ENCODE measurements at regions of chr22 and their contacts with region 1.

Region 1: GRCh38 chr22:50169181-50169759 is 1.3 kb upstream of the PANX2 start:
- DNase-seq: no peak
- ATAC-seq: no peak
- H3K4me3 ChIP-seq: no peak overlapping the region; a peak in 1 of 4 replicates
- H3K27ac ChIP-seq: no peak overlapping the region
- H3K4me1 ChIP-seq: no peaks in the 10 kb centered on the region
- H3K27me3 ChIP-seq: no peaks in the 10 kb centered on the region
- CTCF ChIP-seq: no peak

Region 2: DNA sequence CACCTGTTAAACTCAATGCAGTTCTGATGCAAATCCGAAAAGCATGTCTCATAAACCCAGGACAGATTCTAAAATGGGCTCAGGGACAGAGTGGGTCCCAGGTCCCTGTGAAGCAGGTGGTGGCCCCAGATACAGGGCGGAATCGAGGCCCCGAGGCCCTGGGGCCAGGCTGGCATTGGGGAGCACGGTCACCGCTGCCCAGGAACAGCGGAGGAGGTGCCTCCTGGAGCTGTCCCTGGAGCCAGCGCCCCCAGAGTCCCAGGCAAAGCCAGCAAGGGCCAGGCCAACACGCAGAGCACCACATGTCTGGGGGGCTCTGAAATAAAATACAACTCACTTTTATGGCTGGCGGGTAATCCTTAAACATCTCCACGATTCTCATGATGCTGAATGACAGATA is 101.2 kb before region 1 on chr22:
- CTCF ChIA-PET with region 1: no interaction called
- POLR2A ChIA-PET with region 1: interaction called, 15 read pairs
- in situ Hi-C with region 1: no loop called
- intact Hi-C with region 1: no loop called
- DNase-seq: no peak
- ATAC-seq: no peak
- H3K4me3 ChIP-seq: no peak overlapping the region
- H3K27ac ChIP-seq: no peak overlapping the region
- H3K4me1 ChIP-seq: no peaks in the 10 kb centered on the region
- H3K27me3 ChIP-seq: no peaks in the 10 kb centered on the region
- CTCF ChIP-seq: no peak

Region 3: DNA sequence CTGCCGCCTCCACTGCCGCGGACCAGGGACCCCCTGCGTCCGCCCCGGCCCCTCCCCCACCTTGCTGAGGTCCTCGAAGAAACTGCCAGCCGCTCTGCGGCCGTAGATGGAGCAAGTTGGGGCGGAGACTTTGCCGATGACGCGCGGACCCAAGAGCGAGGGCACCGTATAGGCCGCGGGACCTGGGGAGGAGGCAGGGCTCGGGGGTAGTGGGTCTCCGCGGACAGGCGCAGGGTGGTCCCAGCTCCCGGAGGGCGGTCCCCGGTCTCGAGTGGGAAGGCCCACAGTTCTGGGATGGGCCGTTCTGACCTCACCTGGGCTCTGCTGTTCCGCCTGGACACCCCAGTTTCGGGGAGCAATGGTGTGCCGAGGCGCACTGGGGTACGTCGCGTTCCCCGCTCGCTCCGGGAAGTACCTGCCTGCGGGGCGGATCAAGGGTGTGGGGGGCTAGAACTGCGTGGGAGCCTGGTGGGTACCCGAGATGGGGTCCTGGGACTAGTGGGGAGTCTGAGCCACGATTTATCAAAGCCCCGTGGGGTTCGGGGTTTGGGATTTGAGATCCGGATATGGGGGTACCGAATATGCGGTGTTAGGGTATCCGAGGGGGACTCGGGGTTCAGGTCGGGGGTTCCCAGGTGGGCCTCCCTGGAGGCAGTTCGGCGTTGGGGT is 361.7 kb after region 1 on chr22:
- CTCF ChIA-PET with region 1: no interaction called
- POLR2A ChIA-PET with region 1: no interaction called
- in situ Hi-C with region 1: no loop called
- intact Hi-C with region 1: no loop called
- DNase-seq: no peak
- ATAC-seq: peak; percentile 44
- H3K4me3 ChIP-seq: peak overlapping the region; percentile 56 to 79
- H3K27ac ChIP-seq: peak overlapping the region; percentile 91
- H3K4me1 ChIP-seq: peaks cover 7% of the 10 kb centered on the region
- H3K27me3 ChIP-seq: no peaks in the 10 kb centered on the region
- CTCF ChIP-seq: no peak